ENCODE measurements at regions of chr9 and their contacts with region 1.

Region 1: GRCh38 chr9:99140685-99141314 is 35.9 kb downstream of the TGFBR1 start:
- DNase-seq: peak in 1 of 2 donors; percentile 84
- H3K4me3 ChIP-seq: no peak overlapping the region
- H3K27ac ChIP-seq: peak overlapping the region in 3 of 5 donors; percentile 14 to 76 (median 20)
- H3K4me1 ChIP-seq: peaks cover 0 to 46% (median 16%) of the 10 kb centered on the region in 4 donors
- H3K27me3 ChIP-seq: no peaks in the 10 kb centered on the region
- CTCF ChIP-seq: peak in 5 of 7 experiments; percentile 73 to 83 (median 75)
- EP300 ChIP-seq: no peak
- POLR2A ChIP-seq: no peak

Region 2: GRCh38 chr9:98851730-98852459 is 288.9 kb before region 1 on chr9:
- intact Hi-C with region 1: loop called (anchors 5 kb)
- DNase-seq: no peak
- H3K4me3 ChIP-seq: no peak overlapping the region
- H3K27ac ChIP-seq: peak overlapping the region in 2 of 5 donors; percentile 10 to 58
- H3K4me1 ChIP-seq: peaks cover 0 to 30% (median 17%) of the 10 kb centered on the region in 4 donors
- H3K27me3 ChIP-seq: no peaks in the 10 kb centered on the region
- CTCF ChIP-seq: no peak
- EP300 ChIP-seq: no peak
- POLR2A ChIP-seq: no peak

Region 3: DNA sequence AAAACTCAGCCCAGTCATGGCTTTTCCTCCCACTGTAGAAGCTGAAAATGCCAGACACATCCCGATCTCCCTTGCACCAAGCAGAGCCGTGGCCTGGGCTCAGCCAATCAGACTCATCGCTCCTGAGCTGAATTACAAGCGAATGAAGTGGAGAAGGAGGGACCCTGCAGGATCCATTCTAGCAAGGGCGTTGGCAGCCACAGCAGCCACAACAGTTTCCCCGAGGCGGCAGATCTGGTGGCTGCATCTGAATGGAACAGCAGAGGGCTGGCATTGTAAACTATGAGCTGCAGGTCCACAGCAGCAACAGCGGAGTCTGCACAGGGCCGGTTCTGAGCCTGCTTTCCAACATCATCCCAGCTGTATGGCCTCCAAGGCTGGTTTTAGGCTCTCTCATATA is 57.2 kb after region 1 on chr9:
- intact Hi-C with region 1: no loop called
- DNase-seq: no peak
- H3K4me3 ChIP-seq: no peak overlapping the region
- H3K27ac ChIP-seq: no peak overlapping the region
- H3K4me1 ChIP-seq: no peaks in the 10 kb centered on the region
- H3K27me3 ChIP-seq: no peaks in the 10 kb centered on the region
- CTCF ChIP-seq: no peak
- EP300 ChIP-seq: no peak
- POLR2A ChIP-seq: no peak